Caco-2 (cell line): ENCODE measurements at regions of chr3 and their contacts with region 1.

Region 1: DNA sequence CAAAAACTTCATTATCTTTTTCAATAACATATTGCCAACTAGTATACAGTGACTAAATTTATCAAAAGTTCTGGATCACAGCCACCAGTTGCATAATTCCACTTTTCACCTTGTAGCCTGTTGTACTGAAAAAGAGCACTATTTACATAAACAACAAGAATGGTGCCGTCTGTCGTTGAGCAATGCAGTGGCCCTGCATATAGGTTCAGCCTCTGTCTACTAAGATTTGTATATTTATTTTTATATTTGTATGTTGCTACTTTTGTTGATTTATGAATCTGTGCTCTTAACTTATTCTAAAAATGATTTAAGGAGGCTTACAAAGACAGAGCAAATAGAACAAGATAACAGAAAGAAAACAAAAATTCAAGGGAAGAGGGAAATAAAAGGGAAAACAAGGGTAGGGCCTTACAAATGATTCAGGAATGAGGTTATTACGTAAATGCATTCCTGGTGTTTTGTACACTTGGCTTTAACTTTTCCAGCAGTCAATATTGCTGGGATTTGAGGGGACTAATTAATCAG is 257.6 kb upstream of the STT3B start:
- DNase-seq: peak in 1 of 2 experiments; percentile 30
- H3K4me3 ChIP-seq: no peak overlapping the region
- H3K4me3 Mint-ChIP-seq: no peak overlapping the region
- H3K27ac Mint-ChIP-seq: peak overlapping the region; percentile 6
- H3K4me1 ChIP-seq: peaks cover 39% of the 10 kb centered on the region
- H3K4me1 Mint-ChIP-seq: peaks cover 22% of the 10 kb centered on the region
- H3K27me3 ChIP-seq: no peaks in the 10 kb centered on the region
- H3K27me3 Mint-ChIP-seq: no peaks in the 10 kb centered on the region
- CTCF ChIP-seq: no peak

Region 2: GRCh38 chr3:31294430-31295149 is 19.5 kb after region 1 on chr3:
- CTCF ChIA-PET with region 1: no interaction called
- POLR2A ChIA-PET with region 1: no interaction called
- intact Hi-C with region 1: no loop called
- DNase-seq: no peak
- H3K4me3 ChIP-seq: no peak overlapping the region
- H3K4me3 Mint-ChIP-seq: no peak overlapping the region
- H3K27ac Mint-ChIP-seq: peak overlapping the region; percentile 63
- H3K4me1 ChIP-seq: peaks cover 53% of the 10 kb centered on the region
- H3K4me1 Mint-ChIP-seq: peaks cover 43% of the 10 kb centered on the region
- H3K27me3 ChIP-seq: no peaks in the 10 kb centered on the region
- H3K27me3 Mint-ChIP-seq: no peaks in the 10 kb centered on the region
- CTCF ChIP-seq: no peak

Region 3: DNA sequence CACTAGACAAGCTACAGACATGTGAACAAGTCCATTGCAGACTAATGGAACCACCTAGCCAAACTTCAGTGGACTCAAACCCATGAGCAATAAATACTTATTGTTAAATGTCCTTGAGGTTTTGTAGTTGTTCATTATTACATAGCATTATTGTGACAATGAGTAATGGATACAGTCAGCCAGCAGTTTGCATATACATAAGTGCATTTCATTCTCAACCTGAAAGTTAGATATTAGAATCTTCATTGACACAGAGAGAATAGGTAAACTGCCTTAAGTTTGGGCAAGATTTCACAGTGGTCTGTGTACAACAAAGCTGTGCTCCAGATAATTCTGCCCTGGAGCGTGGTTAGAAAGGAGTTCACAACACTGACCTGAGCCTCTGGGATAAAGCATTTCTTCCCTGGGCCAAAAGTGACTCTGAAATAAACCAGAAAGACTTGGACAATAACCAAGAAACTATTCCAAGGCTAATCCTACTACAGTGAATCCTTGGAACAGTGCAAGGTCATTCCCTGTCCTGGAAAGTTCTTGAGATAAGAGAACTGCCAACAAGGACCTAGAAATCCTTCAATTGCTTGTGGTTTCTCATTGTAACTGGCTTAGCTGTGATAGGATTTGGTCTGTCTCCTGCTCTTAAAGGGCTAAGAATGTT is 32.2 kb after region 1 on chr3:
- CTCF ChIA-PET with region 1: no interaction called
- POLR2A ChIA-PET with region 1: no interaction called
- intact Hi-C with region 1: loop called (anchors 1 kb)
- DNase-seq: no peak
- H3K4me3 ChIP-seq: no peak overlapping the region
- H3K4me3 Mint-ChIP-seq: no peak overlapping the region
- H3K27ac Mint-ChIP-seq: no peak overlapping the region
- H3K4me1 ChIP-seq: peaks cover 32% of the 10 kb centered on the region
- H3K4me1 Mint-ChIP-seq: peaks cover 12% of the 10 kb centered on the region
- H3K27me3 ChIP-seq: no peaks in the 10 kb centered on the region
- H3K27me3 Mint-ChIP-seq: no peaks in the 10 kb centered on the region
- CTCF ChIP-seq: no peak

Region 4: DNA sequence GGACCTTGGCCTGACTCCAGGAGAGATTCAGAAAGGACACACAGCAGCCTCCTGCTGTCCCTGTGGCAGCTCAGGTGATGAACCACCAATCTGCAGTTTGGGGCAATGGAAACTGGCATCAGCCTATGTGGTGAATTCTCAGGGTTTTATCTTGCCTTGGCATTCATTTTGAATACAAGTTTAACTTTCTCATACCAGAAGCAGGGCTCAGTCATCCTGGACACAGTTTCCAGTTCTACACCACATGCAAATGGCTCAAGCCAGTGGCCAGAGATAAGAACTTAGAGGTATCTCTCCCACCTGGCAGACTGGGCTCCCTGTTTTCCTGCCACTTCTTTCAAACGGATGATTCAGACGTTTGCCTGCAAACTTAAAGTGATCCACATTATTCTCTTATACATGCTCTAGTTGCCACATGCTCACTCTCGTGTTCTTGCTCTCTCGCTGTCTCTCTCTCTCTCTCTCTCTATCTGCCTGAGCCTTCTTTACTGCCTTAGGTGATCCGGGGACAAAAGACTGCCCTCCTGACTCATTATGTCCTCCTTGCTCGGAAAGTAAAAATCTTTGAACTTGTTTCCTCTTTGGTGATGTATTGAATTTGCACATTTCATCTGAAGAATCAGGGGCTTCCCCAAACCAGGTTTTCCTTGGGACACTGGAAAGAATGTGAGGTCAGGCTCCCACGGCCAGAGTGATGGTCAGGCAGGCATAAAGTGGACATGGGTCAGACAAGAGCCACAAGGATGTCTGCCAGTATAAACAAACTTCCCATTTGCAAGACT is 158.0 kb after region 1 on chr3:
- CTCF ChIA-PET with region 1: no interaction called
- POLR2A ChIA-PET with region 1: no interaction called
- intact Hi-C with region 1: no loop called
- DNase-seq: no peak
- H3K4me3 ChIP-seq: no peak overlapping the region
- H3K4me3 Mint-ChIP-seq: no peak overlapping the region
- H3K27ac Mint-ChIP-seq: no peak overlapping the region
- H3K4me1 ChIP-seq: no peaks in the 10 kb centered on the region
- H3K4me1 Mint-ChIP-seq: no peaks in the 10 kb centered on the region
- H3K27me3 ChIP-seq: no peaks in the 10 kb centered on the region
- H3K27me3 Mint-ChIP-seq: no peaks in the 10 kb centered on the region
- CTCF ChIP-seq: no peak